ENCODE measurements at regions of chrX and their contacts with region 1.

Region 1: GRCh38 chrX:84729809-84730208 is 227.6 kb upstream of the HDX start:
- DNase-seq: no peak
- H3K4me3 ChIP-seq: no peak overlapping the region
- H3K27ac ChIP-seq: no peak overlapping the region
- H3K4me1 ChIP-seq: no peaks in the 10 kb centered on the region
- H3K27me3 ChIP-seq: no peaks in the 10 kb centered on the region
- CTCF ChIP-seq: peak in 1 of 3 experiments; percentile 38
- POLR2A ChIP-seq: no peak

Region 2: DNA sequence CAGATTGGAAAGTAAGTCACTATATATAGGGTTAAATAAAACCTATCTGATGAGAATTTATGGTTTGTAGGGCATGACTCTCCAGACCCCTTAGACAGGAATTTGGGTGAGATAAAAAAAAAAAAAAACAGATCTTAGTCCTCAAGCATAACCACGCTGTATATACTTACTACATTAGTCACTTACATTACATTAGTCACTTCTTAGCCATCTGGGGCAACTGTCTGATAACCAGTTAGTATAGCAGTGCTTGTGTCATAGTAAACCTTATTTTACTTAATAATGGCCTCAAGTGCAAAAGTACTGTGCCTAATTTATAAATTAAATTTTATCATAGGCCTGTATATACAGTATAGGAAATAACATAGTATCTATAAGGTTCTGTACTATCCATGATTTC is 481.6 kb before region 1 on chrX:
- intact Hi-C with region 1: no loop called
- DNase-seq: no peak
- H3K4me3 ChIP-seq: no peak overlapping the region
- H3K27ac ChIP-seq: no peak overlapping the region
- H3K4me1 ChIP-seq: no peaks in the 10 kb centered on the region
- H3K27me3 ChIP-seq: no peaks in the 10 kb centered on the region
- CTCF ChIP-seq: no peak
- POLR2A ChIP-seq: no peak

Region 3: GRCh38 chrX:84907324-84907968 is 177.6 kb after region 1 on chrX:
- intact Hi-C with region 1: loop called (anchors 5 kb)
- DNase-seq: no peak
- H3K4me3 ChIP-seq: no peak overlapping the region
- H3K27ac ChIP-seq: no peak overlapping the region
- H3K4me1 ChIP-seq: no peaks in the 10 kb centered on the region
- H3K27me3 ChIP-seq: no peaks in the 10 kb centered on the region
- CTCF ChIP-seq: no peak
- POLR2A ChIP-seq: no peak

Measured in vagina (tissue), 2 donors.